Activated CD4-positive, alpha-beta T cell treated with anti-CD3 and anti-CD28 coated beads, Interleukin-2, amount 10 ng/mL, durations not matched to agents 24 days and 14 days (primary cell): ENCODE measurements at regions of chr14 and their contacts with region 1.

Region 1: DNA sequence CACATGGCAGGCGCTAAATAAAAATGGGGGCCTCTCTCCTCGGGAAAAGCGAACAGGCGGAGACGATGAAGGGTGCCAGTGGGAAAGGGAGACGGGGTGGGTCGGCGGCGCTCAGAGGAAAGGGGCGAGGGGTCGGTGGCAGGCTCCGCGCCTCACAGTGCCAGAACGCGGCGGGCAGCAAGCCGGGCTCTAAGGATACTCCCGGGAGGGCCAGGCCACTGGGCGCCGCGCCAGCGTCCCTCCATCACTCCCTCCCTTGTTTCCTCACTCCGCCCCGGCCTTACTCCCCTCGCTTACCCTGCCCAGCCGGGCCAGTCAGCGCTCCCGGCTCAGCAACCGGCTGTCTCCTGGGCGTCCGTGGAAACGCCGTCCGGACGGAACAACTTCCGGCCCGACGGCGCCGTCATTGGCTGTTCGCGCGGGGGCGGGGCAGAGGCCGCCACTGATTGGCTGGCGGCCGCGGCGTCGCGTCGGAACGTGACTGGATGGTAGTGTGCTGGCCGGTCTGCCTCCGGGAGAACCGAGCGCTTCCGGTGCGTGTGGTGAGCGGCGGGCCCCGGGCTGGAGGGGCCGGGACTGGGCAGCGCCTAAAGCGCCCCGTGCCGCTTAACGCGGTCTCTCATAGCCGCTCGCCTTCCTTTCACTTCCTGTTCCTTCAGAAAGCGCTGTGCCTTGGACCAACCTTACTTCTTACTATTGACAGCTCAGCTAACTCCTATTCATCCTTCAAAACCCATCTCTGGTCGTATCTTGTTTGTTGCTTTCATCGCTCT is 53.0 kb downstream of the SLC25A47 start:
- DNase-seq: peak; percentile 99
- H3K4me3 Mint-ChIP-seq: peak within 1 kb of the TSS; percentile 99
- H3K27ac Mint-ChIP-seq: peak within 1 kb of the TSS; percentile 98
- H3K4me1 Mint-ChIP-seq: peaks cover 47% of the 10 kb centered on the region
- H3K27me3 Mint-ChIP-seq: no peaks in the 10 kb centered on the region

Region 2: DNA sequence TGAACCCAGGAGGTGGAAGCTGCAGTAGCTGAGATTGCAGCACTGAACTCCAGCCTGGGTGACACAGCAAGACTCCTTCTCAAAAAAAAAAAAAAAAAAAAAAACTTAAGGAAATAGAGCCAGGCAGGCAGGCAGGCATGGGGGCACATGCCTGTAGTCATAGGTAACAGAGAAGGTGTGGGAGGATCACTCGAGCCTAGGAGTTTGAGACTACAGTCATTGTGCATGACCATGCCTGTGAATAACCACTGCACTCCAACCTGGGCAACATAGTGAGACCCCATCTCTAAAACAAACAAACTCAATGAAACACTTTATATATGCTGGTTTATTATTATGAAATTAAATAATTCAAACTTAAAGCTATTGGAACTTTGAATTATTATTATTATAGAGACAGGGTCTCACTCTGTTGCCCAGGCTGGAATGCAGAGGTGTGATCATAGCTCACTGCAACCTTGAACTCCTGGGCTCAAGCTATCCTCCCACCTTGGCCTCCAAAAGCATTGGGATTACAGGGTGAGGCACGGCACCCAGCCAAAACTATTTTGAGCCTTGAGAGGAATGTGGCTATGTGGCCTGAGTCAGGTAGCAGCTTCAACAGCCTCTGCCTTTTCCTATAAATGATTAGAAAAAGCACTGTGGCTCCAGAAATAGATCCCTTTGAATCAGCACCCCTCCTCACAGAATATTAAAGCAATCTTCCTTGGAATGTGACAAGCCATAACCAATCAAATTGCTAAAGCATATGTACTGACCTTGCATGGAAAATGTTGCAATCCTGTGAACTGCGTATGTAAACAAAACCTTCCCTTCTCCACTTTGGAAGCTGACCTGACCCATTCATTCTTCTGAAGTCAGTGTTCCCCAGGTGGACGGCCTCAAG is 172.0 kb before region 1 on chr14:
- intact Hi-C with region 1: no loop called
- DNase-seq: no peak
- H3K4me3 Mint-ChIP-seq: no peak overlapping the region
- H3K27ac Mint-ChIP-seq: no peak overlapping the region
- H3K4me1 Mint-ChIP-seq: peaks cover 2% of the 10 kb centered on the region
- H3K27me3 Mint-ChIP-seq: peaks cover 8% of the 10 kb centered on the region

Region 3: DNA sequence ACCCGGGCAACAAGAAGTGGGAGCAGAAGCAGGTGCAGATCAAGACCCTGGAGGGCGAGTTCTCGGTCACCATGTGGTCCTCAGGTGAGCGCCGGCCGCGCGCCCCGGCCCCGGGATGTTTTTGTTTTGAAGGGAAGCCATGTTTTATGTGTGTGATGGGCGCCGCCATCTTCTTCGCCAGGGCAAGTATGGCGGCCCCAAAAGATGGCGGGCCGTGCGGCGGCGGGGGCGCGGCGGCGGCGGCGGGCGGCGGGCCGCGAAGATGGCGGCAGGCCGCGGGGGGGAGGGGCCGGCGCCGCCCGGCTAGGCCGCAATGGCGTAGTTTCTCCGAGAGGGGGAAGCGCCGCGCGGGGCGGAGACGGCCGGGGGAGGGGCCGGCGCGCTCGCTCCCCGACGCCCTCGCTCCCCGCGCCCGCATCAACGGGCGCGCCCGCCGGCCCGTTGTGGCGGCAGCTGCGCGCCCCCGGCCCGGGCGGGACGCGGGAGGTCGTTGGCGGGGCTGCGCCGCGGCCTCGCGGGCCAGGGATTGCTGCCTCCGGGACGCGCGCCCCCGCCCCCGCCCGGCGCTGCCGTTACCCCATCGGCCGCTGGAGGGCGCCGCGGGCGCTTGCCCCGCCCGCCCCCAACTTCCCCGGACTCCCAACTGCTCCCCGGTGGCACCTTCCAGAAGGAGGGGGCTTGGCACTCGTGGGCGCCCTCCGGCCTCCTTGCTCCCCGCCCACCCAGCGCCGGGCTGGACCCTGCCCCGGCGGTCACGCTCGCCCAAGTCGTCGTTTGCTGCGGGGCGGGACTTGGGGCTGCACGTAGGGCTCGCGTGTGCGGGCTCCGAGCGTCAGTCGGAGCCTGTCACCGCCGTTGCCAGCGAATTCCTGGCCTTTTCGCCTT is 136.1 kb before region 1 on chr14:
- intact Hi-C with region 1: loop called (anchors 2 kb)
- DNase-seq: peak; percentile 96
- H3K4me3 Mint-ChIP-seq: peak overlapping the region; percentile 96
- H3K27ac Mint-ChIP-seq: peak overlapping the region; percentile 89
- H3K4me1 Mint-ChIP-seq: peaks cover 46% of the 10 kb centered on the region
- H3K27me3 Mint-ChIP-seq: peaks cover 2% of the 10 kb centered on the region

Region 4: DNA sequence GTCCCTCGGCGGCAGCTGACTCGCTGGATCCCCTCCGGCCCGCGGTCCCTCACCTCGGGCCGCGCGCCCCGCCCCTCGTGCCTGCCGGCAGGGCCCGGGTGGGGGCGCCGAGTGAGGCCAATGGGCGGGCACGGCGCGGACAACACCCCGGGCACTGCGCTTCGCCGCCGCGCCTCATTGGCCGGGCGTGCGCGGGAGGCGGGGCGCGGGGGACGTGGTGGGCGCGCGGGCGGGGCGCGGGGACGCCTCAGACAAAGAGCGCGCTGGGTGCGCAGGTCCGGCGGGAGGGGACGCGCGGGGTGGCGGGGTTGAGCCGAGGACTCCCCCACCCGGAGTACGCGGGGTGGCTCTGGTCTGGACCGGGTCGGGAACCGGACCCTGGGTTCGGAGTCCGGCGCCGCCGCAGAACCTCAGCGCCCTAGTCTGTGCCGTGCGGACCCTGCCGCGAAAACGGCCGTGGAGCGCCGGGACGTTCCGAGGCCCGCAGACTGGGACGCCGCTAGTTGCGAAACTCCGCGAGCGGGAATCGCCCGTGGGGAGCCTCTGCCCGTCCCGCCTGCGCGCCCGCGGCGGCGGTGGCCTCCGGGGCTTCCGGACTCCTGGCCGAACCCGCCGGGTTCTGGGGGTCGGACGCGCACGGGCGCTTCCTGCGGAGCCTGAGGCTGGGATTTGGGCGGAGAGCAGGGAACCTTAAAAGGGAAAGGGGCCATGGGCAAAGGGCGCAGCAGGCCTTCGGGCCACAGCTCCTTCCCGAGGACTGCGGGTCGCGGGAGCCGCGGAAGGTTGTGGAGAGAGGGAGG is 69.5 kb before region 1 on chr14 and contains the start of gene SLC25A29:
- intact Hi-C with region 1: loop called (anchors 1 kb)
- DNase-seq: peak; percentile 93
- H3K4me3 Mint-ChIP-seq: peak within 1 kb of the TSS; percentile 83
- H3K27ac Mint-ChIP-seq: peak within 1 kb of the TSS; percentile 25
- H3K4me1 Mint-ChIP-seq: peaks cover 13% of the 10 kb centered on the region
- H3K27me3 Mint-ChIP-seq: peaks cover 24% of the 10 kb centered on the region
- total RNA-seq, gene SLC25A29: 16.4 and 17.0 TPM in 2 replicates

Region 5: DNA sequence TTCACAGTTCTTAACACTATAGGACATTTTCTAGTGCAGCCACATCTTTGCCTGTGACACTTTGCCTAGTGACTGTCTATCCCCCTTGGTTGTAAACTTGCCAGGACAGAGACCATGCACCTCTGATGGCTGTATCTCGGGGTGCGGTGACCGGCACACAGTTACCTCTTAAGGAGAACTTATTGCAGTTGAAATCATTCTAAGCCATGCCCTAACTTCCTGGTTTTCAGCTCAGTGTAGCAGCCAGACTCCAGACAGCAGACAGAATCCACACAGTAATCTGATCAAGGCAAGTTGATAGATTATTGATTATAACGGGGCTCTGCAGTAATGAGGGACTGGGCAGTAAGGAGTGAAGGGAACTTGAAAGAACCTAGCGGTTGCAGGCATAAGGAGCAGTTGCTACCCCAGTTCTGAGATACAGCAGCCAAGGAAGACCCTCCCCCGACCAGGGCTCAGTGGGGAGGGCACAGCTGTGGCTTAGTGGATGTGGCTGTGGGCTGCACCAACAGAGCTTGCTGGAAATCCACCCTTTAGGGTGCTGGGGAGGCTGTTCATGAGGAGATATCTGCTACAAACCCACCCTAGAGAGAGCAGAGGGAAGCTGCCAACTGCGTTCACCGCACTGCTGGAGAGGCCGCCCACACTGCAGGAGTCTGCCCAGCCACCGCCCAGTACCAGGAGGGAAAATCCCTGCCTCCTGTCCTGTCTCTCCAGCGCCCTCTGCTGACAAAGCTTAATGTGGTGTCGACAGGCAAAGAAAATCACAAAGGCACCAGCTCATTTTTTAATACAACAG is 269.2 kb after region 1 on chr14:
- intact Hi-C with region 1: loop called (anchors 2 kb)
- DNase-seq: peak; percentile 97
- H3K4me3 Mint-ChIP-seq: peak overlapping the region; percentile 52
- H3K27ac Mint-ChIP-seq: no peak overlapping the region
- H3K4me1 Mint-ChIP-seq: peaks cover 49% of the 10 kb centered on the region
- H3K27me3 Mint-ChIP-seq: peaks cover 17% of the 10 kb centered on the region